ENCODE measurements at regions of chr1 and their contacts with region 1.

Region 1: GRCh38 chr1:26035959-26036755 is 9.8 kb downstream of the SLC30A2 start:
- DNase-seq: peak; percentile 92
- ATAC-seq: peak; percentile 86

Region 2: DNA sequence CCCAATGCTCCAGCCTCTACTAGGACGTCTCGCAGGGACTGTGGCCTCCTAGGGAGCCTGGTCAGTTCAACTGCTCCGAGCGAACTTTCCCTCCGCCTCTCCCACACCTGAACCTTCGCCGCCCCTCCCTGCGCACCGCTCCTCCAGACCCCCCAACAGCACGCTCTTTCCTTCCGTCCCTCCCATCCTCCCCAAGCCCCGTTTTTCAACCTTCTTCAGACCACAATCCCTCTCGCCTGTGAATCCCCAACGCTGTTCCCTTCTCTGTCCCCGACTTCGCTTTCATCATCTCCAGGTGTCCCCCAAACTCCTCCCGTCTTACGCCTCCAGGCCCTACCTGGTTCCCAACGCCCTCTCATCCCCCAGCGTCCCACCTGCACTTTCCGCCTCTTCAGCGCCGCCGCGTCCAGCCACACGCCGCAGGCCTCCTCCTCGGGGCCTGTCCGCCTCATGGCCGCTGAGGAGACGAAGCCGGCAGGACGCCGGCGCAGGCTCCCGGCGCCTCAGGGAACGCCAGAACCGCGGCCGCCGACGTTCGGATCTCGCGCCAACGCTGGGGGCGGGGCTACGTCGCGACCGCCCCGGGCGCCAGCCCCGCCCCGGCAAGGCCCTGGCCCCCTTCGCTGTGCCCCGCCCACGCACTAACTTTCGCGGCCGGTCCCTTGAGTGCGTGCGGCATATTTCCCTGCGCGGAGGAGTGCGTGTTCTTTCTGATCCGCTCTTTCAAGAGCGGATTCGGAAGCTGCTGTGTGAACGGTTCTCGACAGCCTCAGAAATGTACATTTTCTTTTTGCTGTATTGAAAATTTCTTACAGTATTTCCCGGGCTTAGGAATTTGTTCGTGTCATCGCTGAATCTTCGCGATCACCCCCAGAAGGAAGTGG is 177.0 kb before region 1 on chr1 and contains the start of gene AUNIP:
- intact Hi-C with region 1: no loop called
- DNase-seq: peak; percentile 93
- ATAC-seq: peak; percentile 99
- total RNA-seq, gene AUNIP: 0.11 TPM

Region 3: GRCh38 chr1:25971066-25971810 is 64.9 kb before region 1 on chr1:
- intact Hi-C with region 1: no loop called
- DNase-seq: no peak
- ATAC-seq: no peak

Region 4: GRCh38 chr1:26064591-26064990 is 28.4 kb after region 1 on chr1:
- intact Hi-C with region 1: loop called (anchors 2 kb)
- DNase-seq: no peak
- ATAC-seq: no peak

Region 5: DNA sequence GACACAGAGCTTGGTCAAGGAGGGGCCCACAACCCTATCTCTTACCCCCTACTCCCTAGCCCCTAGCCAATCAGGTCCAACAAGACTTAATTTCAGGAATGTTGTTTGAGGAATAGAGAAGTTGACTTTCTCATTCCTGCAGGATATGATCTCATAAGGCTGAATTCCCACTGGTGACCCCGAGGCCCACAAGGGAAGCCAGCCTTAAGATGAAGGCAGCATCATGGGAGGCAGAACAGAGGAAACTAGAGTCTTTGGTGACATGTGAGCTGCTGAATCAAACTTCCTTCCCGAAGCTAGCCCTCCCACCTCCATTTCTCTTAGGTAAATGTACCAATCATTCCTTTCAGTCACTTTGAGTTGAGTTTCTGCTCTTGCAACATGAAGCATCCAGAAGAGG is 66.4 kb after region 1 on chr1:
- intact Hi-C with region 1: loop called (anchors 5 kb)
- DNase-seq: no peak
- ATAC-seq: no peak

Region 6: GRCh38 chr1:26145041-26145959 is 109.1 kb after region 1 on chr1:
- intact Hi-C with region 1: loop called (anchors 5 kb)
- DNase-seq: peak; percentile 72
- ATAC-seq: peak; percentile 96

Region 7: GRCh38 chr1:26161415-26162219 is 125.5 kb after region 1 on chr1:
- intact Hi-C with region 1: loop called (anchors 5 kb)
- DNase-seq: peak; percentile 82
- ATAC-seq: peak; percentile 74

Measured in Right ventricle myocardium superior (tissue), 1 donor.